ENCODE measurements at regions of chr2 and their contacts with region 1.

Region 1: DNA sequence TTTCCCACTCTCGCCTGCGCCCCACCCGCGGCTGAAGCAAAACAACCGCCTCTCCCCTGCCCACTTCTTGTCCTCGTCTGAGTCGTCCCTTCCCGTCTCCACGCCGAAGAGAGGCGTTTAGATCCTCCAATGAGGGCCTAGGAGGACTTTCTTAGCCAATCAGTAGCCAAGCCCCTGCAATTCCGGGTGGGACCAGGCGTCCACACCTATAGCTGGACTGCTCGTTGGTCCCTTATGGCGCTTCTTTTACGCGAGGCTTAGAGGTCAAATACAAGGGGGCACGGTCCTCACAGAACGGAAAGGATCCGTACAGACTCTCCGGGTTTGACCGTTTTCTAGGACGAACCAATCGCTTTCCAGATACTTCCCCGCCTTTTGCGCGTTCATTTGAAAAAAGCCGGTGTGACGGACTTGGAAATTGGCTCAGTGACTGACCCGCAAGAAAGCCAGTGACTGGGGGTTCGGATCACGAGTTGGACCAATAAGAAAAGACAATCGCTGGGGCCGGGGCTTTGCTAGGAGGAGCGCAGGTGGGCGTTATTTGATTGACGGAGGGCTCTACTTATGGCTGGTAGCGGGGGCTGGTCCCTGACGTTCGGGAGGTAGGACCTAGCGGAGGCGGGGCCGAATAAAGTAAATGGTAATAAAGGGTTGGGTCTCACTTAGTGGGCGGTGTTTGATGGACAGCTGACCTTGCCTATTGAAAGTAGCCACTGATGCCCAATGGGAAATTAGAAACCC is 565 bp upstream of the PPM1B start:
- DNase-seq: peak; percentile 99
- H3K4me3 Mint-ChIP-seq: peak overlapping the region; percentile 90
- H3K27ac Mint-ChIP-seq: peak overlapping the region; percentile 96
- H3K4me1 Mint-ChIP-seq: peaks cover 25% of the 10 kb centered on the region
- H3K27me3 Mint-ChIP-seq: no peaks in the 10 kb centered on the region

Region 2: DNA sequence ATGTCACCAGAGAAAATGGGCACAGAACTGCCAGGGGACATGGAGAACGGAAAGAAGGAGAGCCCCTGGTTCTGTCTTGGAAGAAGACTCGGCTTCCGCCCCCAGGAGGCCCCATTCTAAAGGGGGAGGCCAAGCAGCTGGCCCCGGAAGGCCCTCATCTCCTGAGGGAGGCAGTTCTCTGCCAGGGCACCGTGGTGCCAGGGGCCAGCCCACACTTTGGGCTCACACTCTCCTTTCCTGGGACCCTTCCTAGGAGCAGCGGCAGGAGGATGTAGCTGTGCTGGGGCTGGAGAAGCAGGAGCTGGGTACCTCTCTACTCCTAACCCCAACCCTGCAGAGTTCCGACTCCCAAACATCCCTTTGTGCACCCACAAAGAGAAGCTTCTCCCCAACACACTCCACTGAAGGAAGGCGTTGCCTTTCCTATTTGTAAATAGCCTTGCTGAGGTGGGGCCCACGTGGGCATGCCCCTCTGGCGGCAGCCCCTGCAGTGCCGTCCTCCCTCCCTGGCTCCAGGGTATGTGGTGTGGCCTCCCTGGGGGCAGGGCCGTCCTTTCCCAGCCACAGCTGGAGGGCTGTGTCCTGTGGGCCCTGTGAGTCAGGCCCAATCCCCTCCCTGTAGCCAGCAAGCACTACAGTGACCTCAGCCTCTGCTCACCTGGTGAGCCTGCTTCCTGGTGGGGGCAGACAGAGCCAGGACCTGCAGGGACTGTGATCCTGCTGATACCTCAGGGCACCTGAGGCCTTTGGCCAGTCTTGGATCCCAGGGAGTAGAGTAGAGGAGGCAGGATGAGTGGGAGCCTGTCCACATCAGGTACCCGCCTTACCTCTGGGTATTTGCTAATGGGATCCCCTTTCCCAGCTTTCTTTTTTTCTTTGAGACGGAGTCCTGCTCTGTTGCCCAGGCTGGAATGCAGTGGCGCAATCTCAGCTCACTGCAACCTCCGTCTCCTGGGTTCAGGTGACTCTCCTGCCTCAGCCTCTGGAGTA is 968.3 kb before region 1 on chr2:
- CTCF ChIA-PET with region 1: no interaction called
- intact Hi-C with region 1: loop called (anchors 5 kb)
- DNase-seq: no peak
- H3K4me3 Mint-ChIP-seq: no peak overlapping the region
- H3K27ac Mint-ChIP-seq: no peak overlapping the region
- H3K4me1 Mint-ChIP-seq: peaks cover 48% of the 10 kb centered on the region
- H3K27me3 Mint-ChIP-seq: no peaks in the 10 kb centered on the region

Region 3: DNA sequence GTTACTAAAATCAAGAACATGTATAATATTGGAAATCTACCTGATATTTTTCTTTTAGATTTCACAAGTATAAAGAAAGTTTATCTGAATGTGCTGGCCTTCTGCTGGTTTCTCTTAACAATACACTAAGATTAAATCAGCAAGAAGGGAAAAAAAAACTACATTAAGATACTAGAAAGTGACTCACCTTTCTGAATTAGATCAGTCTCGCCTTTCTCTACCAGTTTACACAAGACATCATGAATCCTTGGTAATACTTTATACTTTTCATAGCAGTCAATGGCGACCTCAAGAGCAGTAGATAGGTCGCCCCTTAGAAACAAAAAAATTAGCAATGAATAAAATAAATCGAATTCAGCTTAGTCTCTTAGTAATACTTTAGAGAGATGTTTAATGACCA is 233.5 kb before region 1 on chr2:
- CTCF ChIA-PET with region 1: no interaction called
- intact Hi-C with region 1: loop called (anchors 10 kb)
- DNase-seq: no peak
- H3K4me3 Mint-ChIP-seq: no peak overlapping the region
- H3K27ac Mint-ChIP-seq: peak overlapping the region; percentile 70
- H3K4me1 Mint-ChIP-seq: peaks cover 16% of the 10 kb centered on the region
- H3K27me3 Mint-ChIP-seq: no peaks in the 10 kb centered on the region

Region 4: GRCh38 chr2:44120428-44120827 is 47.7 kb before region 1 on chr2:
- CTCF ChIA-PET with region 1: no interaction called
- intact Hi-C with region 1: loop called (anchors 1 kb)
- DNase-seq: peak; percentile 62
- H3K4me3 Mint-ChIP-seq: no peak overlapping the region
- H3K27ac Mint-ChIP-seq: peak overlapping the region; percentile 4
- H3K4me1 Mint-ChIP-seq: peaks cover 32% of the 10 kb centered on the region
- H3K27me3 Mint-ChIP-seq: no peaks in the 10 kb centered on the region

Region 5: GRCh38 chr2:44191739-44192138 is 23.6 kb after region 1 on chr2:
- CTCF ChIA-PET with region 1: no interaction called
- intact Hi-C with region 1: loop called (anchors 1 kb)
- DNase-seq: no peak
- H3K4me3 Mint-ChIP-seq: no peak overlapping the region
- H3K27ac Mint-ChIP-seq: peak overlapping the region; percentile 68
- H3K4me1 Mint-ChIP-seq: peaks cover 65% of the 10 kb centered on the region
- H3K27me3 Mint-ChIP-seq: no peaks in the 10 kb centered on the region

Region 6: GRCh38 chr2:44218771-44219170 is 50.7 kb after region 1 on chr2:
- CTCF ChIA-PET with region 1: no interaction called
- intact Hi-C with region 1: no loop called
- DNase-seq: no peak
- H3K4me3 Mint-ChIP-seq: no peak overlapping the region
- H3K27ac Mint-ChIP-seq: no peak overlapping the region
- H3K4me1 Mint-ChIP-seq: peaks cover 23% of the 10 kb centered on the region
- H3K27me3 Mint-ChIP-seq: no peaks in the 10 kb centered on the region

Region 7: GRCh38 chr2:44361330-44362206 is 193.5 kb after region 1 on chr2 and contains the starts of genes CAMKMT and PREPL:
- CTCF ChIA-PET with region 1: no interaction called
- intact Hi-C with region 1: loop called (anchors 1 kb)
- DNase-seq: peak; percentile 99
- H3K4me3 Mint-ChIP-seq: peak within 1 kb of the TSS; percentile 97
- H3K27ac Mint-ChIP-seq: peak within 1 kb of the TSS; percentile 99
- H3K4me1 Mint-ChIP-seq: peaks cover 42% of the 10 kb centered on the region
- H3K27me3 Mint-ChIP-seq: no peaks in the 10 kb centered on the region
- total RNA-seq, gene CAMKMT: 12.8 to 19.6 TPM
- total RNA-seq, gene PREPL: 27.8 to 29.6 TPM

Region 8: DNA sequence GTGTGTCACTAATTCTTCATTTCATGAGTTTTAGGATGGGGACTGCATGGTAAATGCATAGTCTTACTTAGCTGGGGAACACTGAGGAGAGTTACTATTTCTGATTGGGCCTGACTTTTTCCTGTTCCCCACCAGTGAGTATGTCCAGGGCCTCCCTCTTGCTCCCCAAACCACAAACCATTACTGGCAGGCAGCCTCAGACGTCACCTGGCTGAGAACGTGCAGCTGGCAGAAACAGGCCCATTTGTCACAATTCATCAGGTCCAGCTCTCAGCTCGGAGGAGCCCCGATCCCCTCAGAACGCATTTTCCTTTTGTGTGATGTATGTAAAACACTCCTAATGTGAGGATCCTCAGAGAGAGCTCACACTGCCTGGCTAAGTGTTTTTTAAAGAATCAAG is 701.7 kb after region 1 on chr2:
- CTCF ChIA-PET with region 1: no interaction called
- intact Hi-C with region 1: no loop called
- DNase-seq: no peak
- H3K4me3 Mint-ChIP-seq: no peak overlapping the region
- H3K27ac Mint-ChIP-seq: no peak overlapping the region
- H3K4me1 Mint-ChIP-seq: no peaks in the 10 kb centered on the region
- H3K27me3 Mint-ChIP-seq: peaks cover 8% of the 10 kb centered on the region